Heart left ventricle (tissue), 16 donors: ENCODE measurements at regions of chr15 and their contacts with region 1.

Region 1: DNA sequence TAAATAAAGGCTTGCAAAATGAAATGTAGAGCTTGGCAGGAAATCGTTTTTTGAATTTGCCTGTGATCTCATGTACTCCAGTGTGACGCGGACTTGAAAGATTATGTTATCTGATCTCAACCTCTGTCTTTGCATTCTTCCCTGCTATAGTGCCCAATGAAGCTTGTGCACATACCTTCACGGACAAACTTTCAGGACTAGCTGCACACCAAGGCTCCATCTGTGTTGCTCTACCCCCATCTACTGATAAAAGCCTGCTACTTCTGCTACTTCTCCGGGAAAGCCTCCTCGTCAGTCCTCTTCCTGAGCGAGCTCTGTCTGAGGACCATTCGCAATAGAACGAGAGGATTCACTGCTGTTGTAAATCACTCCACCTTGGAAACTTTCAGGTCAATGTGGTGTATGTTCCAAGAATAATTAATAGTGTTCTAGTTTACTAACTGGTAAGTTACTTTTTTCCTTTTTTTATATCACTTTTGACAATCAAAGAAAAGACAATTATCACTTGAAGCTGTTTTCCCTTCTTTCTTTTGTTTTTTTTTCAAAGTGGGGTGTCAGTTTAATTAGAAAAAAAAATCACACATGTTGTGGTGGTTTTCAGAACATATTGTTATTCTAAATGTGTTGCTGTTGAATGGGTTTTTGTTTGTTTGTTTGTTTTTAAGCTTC is 217.6 kb downstream of the ARRDC4 start:
- DNase-seq: peak in 3 of 5 donors; percentile 13 to 23 (median 22)
- ATAC-seq: peak in 3 of 4 donors; percentile 70 to 87 (median 72)
- H3K4me3 ChIP-seq: no peak overlapping the region
- H3K27ac ChIP-seq: no peak overlapping the region
- H3K4me1 ChIP-seq: no peaks in the 10 kb centered on the region
- H3K27me3 ChIP-seq: peaks cover 0 to 82% (median 19%) of the 10 kb centered on the region in 9 donors
- CTCF ChIP-seq: peak; percentile 31 to 74 (median 56)
- POLR2A ChIP-seq: no peak

Region 2: DNA sequence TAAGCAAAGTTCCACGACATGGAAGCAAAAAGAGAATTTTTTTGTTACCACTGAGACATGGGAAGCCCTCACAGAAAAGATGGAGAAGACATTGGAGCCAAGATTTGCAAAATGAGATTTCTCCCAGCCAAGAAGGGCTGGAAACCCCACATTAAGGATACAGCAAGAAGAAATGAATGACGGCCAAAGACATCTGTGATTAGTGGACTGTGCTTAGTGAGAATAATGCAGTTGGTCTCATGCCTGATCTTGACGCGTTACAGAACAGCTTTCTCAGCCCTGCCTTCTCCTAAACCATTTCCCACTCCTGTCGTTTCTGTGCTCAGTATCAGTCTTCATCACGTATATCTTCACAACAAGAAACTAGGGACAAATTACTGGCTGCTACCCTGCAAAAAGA is 263.3 kb before region 1 on chr15:
- intact Hi-C with region 1: loop called in 4 of 10 experiments (anchors 5 kb)
- DNase-seq: no peak
- ATAC-seq: no peak
- H3K4me3 ChIP-seq: no peak overlapping the region
- H3K27ac ChIP-seq: no peak overlapping the region
- H3K4me1 ChIP-seq: peaks cover 0 to 7% (median 0%) of the 10 kb centered on the region in 12 donors
- H3K27me3 ChIP-seq: peaks cover 0 to 17% (median 3%) of the 10 kb centered on the region in 9 donors
- CTCF ChIP-seq: no peak
- POLR2A ChIP-seq: no peak

Region 3: DNA sequence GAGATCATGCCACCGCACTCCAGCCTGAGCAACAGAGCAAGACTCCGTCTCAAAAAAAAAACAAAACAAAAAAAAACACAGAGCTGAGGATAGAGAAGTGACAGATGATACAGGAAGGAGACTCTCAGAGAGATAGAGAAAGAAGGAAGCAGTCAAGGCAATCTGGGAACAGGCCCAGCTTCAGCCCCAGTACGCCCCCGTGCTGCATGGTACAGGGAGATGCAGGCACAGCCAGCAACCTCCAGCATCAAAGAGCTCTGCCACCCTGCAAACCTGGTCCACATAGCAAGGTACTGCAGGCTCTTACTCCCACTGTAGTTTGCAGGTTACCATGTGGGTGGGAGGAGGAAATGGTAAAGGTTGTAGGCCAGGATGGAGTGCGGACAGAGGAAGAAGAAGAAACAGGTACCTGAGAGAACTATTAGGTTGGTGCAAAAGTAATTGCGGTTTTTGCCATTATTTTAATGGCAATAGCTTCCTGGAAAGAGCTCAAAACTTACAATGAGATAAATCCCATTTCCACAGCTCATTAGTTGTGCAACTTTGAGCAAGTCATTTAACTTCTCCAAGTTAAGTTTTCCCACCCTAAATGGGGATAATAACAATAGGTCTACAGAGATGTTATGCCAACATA is 35.4 kb after region 1 on chr15:
- intact Hi-C with region 1: no loop called
- DNase-seq: no peak
- ATAC-seq: no peak
- H3K4me3 ChIP-seq: no peak overlapping the region
- H3K27ac ChIP-seq: no peak overlapping the region
- H3K4me1 ChIP-seq: no peaks in the 10 kb centered on the region
- H3K27me3 ChIP-seq: peaks cover 0 to 5% (median 0%) of the 10 kb centered on the region in 9 donors
- CTCF ChIP-seq: no peak
- POLR2A ChIP-seq: no peak

Region 4: GRCh38 chr15:98592136-98592535 is 414.1 kb after region 1 on chr15:
- intact Hi-C with region 1: no loop called
- DNase-seq: no peak
- ATAC-seq: no peak
- H3K4me3 ChIP-seq: no peak overlapping the region
- H3K27ac ChIP-seq: no peak overlapping the region
- H3K4me1 ChIP-seq: no peaks in the 10 kb centered on the region
- H3K27me3 ChIP-seq: peaks cover 0 to 92% (median 18%) of the 10 kb centered on the region in 9 donors
- CTCF ChIP-seq: no peak
- POLR2A ChIP-seq: no peak